GM12878 (cell line): ENCODE measurements at regions of chr5 and their contacts with region 1.

Region 1: GRCh38 chr5:10283927-10284635 is 23.6 kb downstream of the CMBL start:
- DNase-seq: peak; percentile 40
- ATAC-seq: peak; percentile 99
- H3K4me3 ChIP-seq: no peak overlapping the region
- H3K27ac ChIP-seq: no peak overlapping the region; the same call in 1 of the 2 replicates
- H3K4me1 ChIP-seq: peaks cover 17% of the 10 kb centered on the region
- H3K27me3 ChIP-seq: no peaks in the 10 kb centered on the region
- CTCF ChIP-seq: peak; percentile 86 to 96 (median 95)
- EP300 ChIP-seq: no peak
- POLR2A ChIP-seq: no peak
- RAD21 ChIP-seq: peak; percentile 80

Region 2: DNA sequence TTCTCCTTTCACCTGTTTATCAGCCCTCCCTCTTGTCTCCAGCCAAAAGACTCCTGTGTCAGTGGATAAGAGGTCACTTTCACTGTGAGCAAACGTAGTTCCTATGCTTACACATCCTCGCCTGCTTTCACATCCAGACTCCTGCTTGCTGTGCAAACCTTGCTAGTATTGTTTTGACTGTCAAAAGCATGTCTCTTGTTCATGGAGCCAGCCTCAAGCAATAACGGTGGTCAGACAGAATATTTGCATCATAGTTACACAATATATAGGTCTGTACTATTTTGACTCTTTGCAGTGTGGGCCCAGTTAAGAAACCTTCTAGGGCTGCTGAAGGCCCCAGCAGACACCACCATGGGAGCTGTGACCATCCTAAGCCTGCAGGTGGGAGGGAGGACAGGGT is 1158.2 kb before region 1 on chr5:
- CTCF ChIA-PET with region 1: no interaction called
- POLR2A ChIA-PET with region 1: no interaction called
- RAD21 ChIA-PET with region 1: no interaction called
- SMC1A ChIA-PET with region 1: no interaction called
- in situ Hi-C with region 1: no loop called
- intact Hi-C with region 1: no loop called
- DNase-seq: peak; percentile 26
- ATAC-seq: peak; percentile 44; the same call in 2 of the 3 replicates
- H3K4me3 ChIP-seq: no peak overlapping the region
- H3K27ac ChIP-seq: no peak overlapping the region
- H3K4me1 ChIP-seq: no peaks in the 10 kb centered on the region; the same call in 1 of the 2 replicates
- H3K27me3 ChIP-seq: no peaks in the 10 kb centered on the region
- CTCF ChIP-seq: no peak
- EP300 ChIP-seq: no peak
- POLR2A ChIP-seq: no peak
- RAD21 ChIP-seq: no peak

Region 3: DNA sequence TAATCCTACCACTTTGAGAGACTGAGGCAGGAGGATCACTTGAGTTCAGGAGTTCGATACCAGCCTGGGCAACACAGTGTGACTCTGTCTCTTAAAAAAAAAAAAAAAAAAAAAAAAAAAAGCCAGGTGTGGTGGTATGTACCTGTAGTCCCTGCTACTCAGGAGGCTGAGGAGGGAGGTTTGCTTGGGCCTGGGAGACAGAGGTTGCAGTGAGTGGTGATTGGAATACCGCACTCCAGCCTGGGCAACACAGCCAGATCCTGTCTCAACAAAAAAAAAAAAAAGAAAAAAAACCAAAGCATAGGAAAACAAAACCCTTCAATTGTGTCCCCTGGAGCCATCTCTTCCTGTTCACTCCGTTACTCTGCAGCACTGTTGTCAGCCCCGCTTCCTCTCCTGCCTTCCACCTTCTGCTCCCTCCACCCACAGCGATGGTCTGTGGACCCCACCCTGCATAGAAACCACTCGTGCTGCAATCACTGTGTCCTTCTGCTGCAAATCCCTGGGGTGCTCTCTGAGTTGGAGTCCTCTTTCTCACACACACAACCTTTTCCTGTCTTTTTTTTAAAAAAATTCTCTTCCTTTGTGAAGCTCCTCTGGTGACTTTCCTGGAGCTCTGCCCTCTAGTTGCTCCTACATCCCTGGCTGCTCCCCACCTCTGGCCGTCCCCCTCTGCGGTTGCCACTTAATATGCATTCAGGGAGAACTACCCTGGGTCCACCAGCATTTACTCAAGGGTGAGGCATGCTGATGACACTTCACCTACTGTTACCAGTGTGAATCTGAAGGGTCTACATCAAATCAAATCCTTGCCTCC is 11.8 kb before region 1 on chr5:
- CTCF ChIA-PET with region 1: no interaction called
- POLR2A ChIA-PET with region 1: no interaction called
- RAD21 ChIA-PET with region 1: no interaction called
- SMC1A ChIA-PET with region 1: no interaction called
- in situ Hi-C with region 1: no loop called
- intact Hi-C with region 1: no loop called
- DNase-seq: no peak
- ATAC-seq: no peak
- H3K4me3 ChIP-seq: no peak overlapping the region
- H3K27ac ChIP-seq: no peak overlapping the region
- H3K4me1 ChIP-seq: peaks cover 2% of the 10 kb centered on the region; the same call in 1 of the 2 replicates
- H3K27me3 ChIP-seq: no peaks in the 10 kb centered on the region; a peak in 1 of 4 replicates
- CTCF ChIP-seq: no peak
- EP300 ChIP-seq: no peak
- POLR2A ChIP-seq: no peak
- RAD21 ChIP-seq: no peak

Region 4: GRCh38 chr5:10358999-10359398 is 74.9 kb after region 1 on chr5:
- CTCF ChIA-PET with region 1: interaction called, 34 read pairs
- POLR2A ChIA-PET with region 1: interaction called, 3 read pairs
- RAD21 ChIA-PET with region 1: interaction called, 18 read pairs
- SMC1A ChIA-PET with region 1: interaction called, 14 read pairs
- in situ Hi-C with region 1: no loop called
- intact Hi-C with region 1: loop called (anchors 1 kb)
- DNase-seq: no peak
- ATAC-seq: no peak
- H3K4me3 ChIP-seq: no peak overlapping the region
- H3K27ac ChIP-seq: no peak overlapping the region
- H3K4me1 ChIP-seq: peaks cover 3% of the 10 kb centered on the region; the same call in 1 of the 2 replicates
- H3K27me3 ChIP-seq: no peaks in the 10 kb centered on the region
- CTCF ChIP-seq: no peak
- EP300 ChIP-seq: no peak
- POLR2A ChIP-seq: no peak
- RAD21 ChIP-seq: no peak

Region 5: DNA sequence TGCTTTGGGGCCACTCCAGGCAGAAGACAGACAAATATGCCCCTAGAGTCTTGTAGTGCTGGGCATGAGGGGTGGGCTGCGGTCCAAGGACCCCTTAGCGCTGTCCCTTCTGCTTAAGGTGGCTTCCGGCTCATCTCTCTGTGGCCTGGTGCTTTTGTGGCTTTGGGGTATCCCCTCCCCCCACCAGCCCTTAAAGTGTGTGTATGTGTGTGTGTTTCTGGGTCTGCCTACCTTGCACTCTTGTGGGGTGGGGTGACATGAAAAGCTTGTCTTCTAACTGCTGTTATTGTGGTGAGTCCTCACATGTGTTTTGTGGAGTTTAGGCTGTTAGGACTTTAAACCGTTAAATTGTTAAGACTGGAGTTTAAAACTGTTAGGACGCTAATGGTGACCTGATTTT is 93.0 kb after region 1 on chr5:
- CTCF ChIA-PET with region 1: interaction called, 10 read pairs
- POLR2A ChIA-PET with region 1: no interaction called
- RAD21 ChIA-PET with region 1: no interaction called
- SMC1A ChIA-PET with region 1: no interaction called
- in situ Hi-C with region 1: no loop called
- intact Hi-C with region 1: no loop called
- DNase-seq: no peak
- ATAC-seq: peak; percentile 16; the same call in 1 of the 3 replicates
- H3K4me3 ChIP-seq: no peak overlapping the region
- H3K27ac ChIP-seq: no peak overlapping the region
- H3K4me1 ChIP-seq: no peaks in the 10 kb centered on the region
- H3K27me3 ChIP-seq: no peaks in the 10 kb centered on the region
- CTCF ChIP-seq: no peak
- EP300 ChIP-seq: no peak
- POLR2A ChIP-seq: no peak; the same call in 1 of the 2 replicates
- RAD21 ChIP-seq: no peak

Region 6: GRCh38 chr5:10418654-10419345 is 134.7 kb after region 1 on chr5:
- CTCF ChIA-PET with region 1: interaction called, 43 read pairs
- POLR2A ChIA-PET with region 1: no interaction called
- RAD21 ChIA-PET with region 1: interaction called, 25 read pairs
- SMC1A ChIA-PET with region 1: interaction called, 13 read pairs
- in situ Hi-C with region 1: loop called (anchors 5 kb)
- intact Hi-C with region 1: loop called (anchors 1 kb)
- DNase-seq: no peak
- ATAC-seq: peak; percentile 65
- H3K4me3 ChIP-seq: no peak overlapping the region
- H3K27ac ChIP-seq: peak overlapping the region; percentile 35
- H3K4me1 ChIP-seq: 0 out of 2 replicates have a peak, but pooled peaks cover 3% of the 10 kb centered on the region
- H3K27me3 ChIP-seq: no peaks in the 10 kb centered on the region
- CTCF ChIP-seq: no peak
- EP300 ChIP-seq: no peak
- POLR2A ChIP-seq: no peak
- RAD21 ChIP-seq: no peak

Region 7: DNA sequence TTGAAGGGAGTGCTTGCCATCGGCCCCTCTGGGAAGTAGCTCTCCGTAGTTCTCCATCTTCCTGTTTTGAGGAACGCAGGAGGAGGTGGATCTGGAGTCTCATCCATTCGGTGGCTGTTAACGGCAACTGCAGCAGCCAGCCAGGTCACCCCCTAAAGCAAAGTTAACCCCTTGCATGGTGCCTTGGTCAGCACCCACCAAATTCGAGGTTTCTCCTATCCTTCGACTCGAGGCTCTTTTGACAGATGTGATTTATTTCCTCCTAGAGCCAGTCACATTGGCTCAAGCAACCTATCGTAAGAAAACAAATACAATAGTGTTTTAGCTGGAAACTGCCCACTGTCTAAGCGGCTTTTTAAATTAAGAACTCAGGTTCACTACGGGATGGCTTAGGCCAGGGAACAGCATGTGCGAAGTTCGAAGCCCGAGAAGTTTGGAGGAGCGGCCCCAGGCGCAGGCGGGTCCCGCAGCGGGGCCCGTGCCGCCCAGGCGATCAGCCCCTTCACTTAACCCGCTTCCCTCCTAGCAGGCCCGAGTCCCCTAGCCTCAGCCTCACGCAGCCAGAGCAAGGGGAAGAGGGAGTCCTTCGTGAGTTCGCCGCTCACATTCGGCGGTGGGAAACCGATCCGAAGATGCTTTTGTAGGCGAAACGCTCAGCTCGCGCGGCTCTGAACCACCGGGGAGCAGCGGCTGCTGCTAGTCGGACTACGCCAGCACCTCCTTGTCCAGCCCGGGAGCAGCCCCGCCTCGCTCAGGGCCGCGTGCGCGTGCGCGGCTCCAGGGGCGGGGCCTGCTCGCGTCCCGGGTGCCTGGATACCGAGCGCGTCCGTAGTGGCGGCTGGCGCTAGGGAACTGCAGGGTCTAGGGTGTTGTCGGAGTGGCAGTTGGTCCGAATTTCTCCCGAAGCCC is 157.3 kb after region 1 on chr5 and contains the start of gene ROPN1L:
- CTCF ChIA-PET with region 1: interaction called, 12 read pairs
- POLR2A ChIA-PET with region 1: no interaction called
- RAD21 ChIA-PET with region 1: interaction called, 6 read pairs
- SMC1A ChIA-PET with region 1: interaction called, 3 read pairs
- in situ Hi-C with region 1: no loop called
- intact Hi-C with region 1: loop called (anchors 5 kb)
- DNase-seq: peak; percentile 49
- ATAC-seq: peak; percentile 98
- H3K4me3 ChIP-seq: peak within 1 kb of the TSS; percentile 64
- H3K27ac ChIP-seq: no peak within 1 kb of the TSS
- H3K4me1 ChIP-seq: peaks cover 10% of the 10 kb centered on the region
- H3K27me3 ChIP-seq: peaks cover 0 to 6% of the 10 kb centered on the region in 2 experiments; a peak in 2 of 4 replicates
- CTCF ChIP-seq: no peak
- EP300 ChIP-seq: no peak
- POLR2A ChIP-seq: peak; percentile 58; the same call in 1 of the 2 replicates
- RAD21 ChIP-seq: no peak
- polyA plus RNA-seq, gene ROPN1L: not detected